ENCODE measurements at regions of chr6 and their contacts with region 1.

Region 1: GRCh38 chr6:142236691-142237090 is 65.1 kb upstream of the ADGRG6 start:
- DNase-seq: no peak
- H3K4me3 ChIP-seq: no peak overlapping the region
- H3K27ac ChIP-seq: no peak overlapping the region
- H3K4me1 ChIP-seq: peaks cover 0 to 3% (median 2%) of the 10 kb centered on the region in 4 experiments; a peak in 3 of 7 replicates
- H3K27me3 ChIP-seq: no peaks in the 10 kb centered on the region
- CTCF ChIP-seq: no peak
- EP300 ChIP-seq: no peak
- POLR2A ChIP-seq: no peak
- RAD21 ChIP-seq: no peak

Region 2: DNA sequence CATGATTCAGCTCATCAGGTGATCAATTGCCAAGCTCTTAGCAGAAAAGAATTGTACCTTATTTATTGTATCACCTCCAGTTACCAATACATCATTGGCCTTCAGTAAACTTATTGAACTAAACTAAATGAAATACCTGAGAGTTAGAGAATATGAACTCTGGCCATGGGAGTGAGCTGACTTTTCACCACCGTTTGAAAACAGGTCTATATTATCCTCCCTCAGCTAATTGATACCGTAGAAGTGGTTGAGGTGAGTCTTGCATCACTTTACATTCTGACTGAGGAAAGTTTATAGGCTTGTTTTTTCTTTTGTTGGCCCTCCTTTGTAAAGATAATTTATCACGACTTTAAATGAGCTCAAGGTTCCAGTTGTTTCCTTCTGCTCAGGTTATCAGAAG is 12.6 kb after region 1 on chr6:
- CTCF ChIA-PET with region 1: interaction called, 23 read pairs
- POLR2A ChIA-PET with region 1: no interaction called
- DNase-seq: no peak
- H3K4me3 ChIP-seq: no peak overlapping the region
- H3K27ac ChIP-seq: no peak overlapping the region
- H3K4me1 ChIP-seq: no peaks in the 10 kb centered on the region
- H3K27me3 ChIP-seq: no peaks in the 10 kb centered on the region
- CTCF ChIP-seq: no peak
- EP300 ChIP-seq: no peak
- POLR2A ChIP-seq: no peak
- RAD21 ChIP-seq: no peak

Region 3: GRCh38 chr6:142387997-142388815 is 151.5 kb after region 1 on chr6:
- CTCF ChIA-PET with region 1: interaction called, 20 read pairs
- POLR2A ChIA-PET with region 1: no interaction called
- DNase-seq: no peak
- H3K4me3 ChIP-seq: no peak overlapping the region
- H3K27ac ChIP-seq: no peak overlapping the region
- H3K4me1 ChIP-seq: no peaks in the 10 kb centered on the region
- H3K27me3 ChIP-seq: no peaks in the 10 kb centered on the region
- CTCF ChIP-seq: peak in 2 of 3 experiments; percentile 32 to 59; a peak in 2 of 4 replicates
- EP300 ChIP-seq: no peak
- POLR2A ChIP-seq: no peak
- RAD21 ChIP-seq: peak; percentile 62 to 66